ENCODE measurements at regions of chr3 and their contacts with region 1.

Region 1: DNA sequence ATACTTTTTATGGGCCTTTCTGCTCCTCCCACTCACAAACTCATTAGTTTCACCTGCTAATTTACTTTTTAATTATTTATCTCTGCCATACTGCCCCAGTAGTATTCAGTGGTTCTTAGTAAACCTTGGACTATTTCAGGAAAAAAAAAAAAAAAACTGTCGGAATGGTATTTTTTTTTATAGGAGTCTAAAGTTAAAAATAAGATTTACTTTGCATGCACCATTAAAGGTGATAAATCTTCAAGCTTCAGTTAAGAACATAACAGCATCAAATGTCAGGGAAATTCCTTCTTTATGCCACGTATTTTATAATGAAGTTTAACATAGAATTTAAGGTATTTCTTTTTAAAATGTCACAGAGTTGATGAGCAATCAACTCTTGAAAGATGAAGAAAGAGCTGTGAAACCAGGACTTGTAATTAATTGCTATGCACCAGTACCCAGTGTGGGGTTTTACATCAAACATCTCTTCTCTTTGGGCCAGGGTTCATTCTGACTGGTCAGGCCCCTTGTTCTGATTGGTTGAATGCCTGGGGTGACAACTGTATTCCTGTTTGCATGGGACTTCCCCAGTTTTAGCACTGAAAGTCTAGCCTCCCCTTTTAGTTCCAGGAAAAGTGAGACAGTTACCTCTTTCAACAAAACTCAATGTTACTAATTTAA is 40.3 kb upstream of the PTPRG start:
- DNase-seq: peak; percentile 87
- H3K4me3 Mint-ChIP-seq: no peak overlapping the region
- H3K27ac Mint-ChIP-seq: peak overlapping the region; percentile 70
- H3K4me1 Mint-ChIP-seq: peaks cover 31% of the 10 kb centered on the region
- H3K27me3 Mint-ChIP-seq: peaks cover 3% of the 10 kb centered on the region

Region 2: DNA sequence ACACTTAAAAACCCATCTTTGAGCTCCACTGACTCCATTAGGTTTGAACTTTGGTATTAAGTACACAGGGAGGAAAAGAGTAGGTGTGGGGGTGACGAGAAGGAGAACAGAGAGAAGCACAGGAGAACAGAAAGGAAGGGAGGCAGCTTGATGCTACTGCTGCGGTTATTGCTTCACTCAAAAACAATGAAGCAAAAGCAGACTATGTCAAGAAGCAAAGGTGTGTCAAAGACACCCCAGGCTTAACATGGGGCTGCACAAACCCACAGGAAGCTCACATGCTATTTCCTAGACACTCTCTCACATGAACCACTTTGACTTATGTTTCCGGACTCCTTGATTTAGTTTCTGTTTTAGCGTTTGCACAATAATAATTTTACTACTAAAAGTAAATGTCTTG is 1510.3 kb before region 1 on chr3:
- CTCF ChIA-PET with region 1: interaction called, 7 read pairs
- intact Hi-C with region 1: loop called (anchors 10 kb)
- DNase-seq: peak; percentile 80
- H3K4me3 Mint-ChIP-seq: peak overlapping the region; percentile 75
- H3K27ac Mint-ChIP-seq: peak overlapping the region; percentile 97
- H3K4me1 Mint-ChIP-seq: peaks cover 87% of the 10 kb centered on the region
- H3K27me3 Mint-ChIP-seq: no peaks in the 10 kb centered on the region

Region 3: GRCh38 chr3:60086811-60087210 is 1434.3 kb before region 1 on chr3:
- CTCF ChIA-PET with region 1: no interaction called
- intact Hi-C with region 1: loop called (anchors 5 kb)
- DNase-seq: peak; percentile 78
- H3K4me3 Mint-ChIP-seq: no peak overlapping the region
- H3K27ac Mint-ChIP-seq: peak overlapping the region; percentile 78
- H3K4me1 Mint-ChIP-seq: peaks cover 66% of the 10 kb centered on the region
- H3K27me3 Mint-ChIP-seq: no peaks in the 10 kb centered on the region

Region 4: DNA sequence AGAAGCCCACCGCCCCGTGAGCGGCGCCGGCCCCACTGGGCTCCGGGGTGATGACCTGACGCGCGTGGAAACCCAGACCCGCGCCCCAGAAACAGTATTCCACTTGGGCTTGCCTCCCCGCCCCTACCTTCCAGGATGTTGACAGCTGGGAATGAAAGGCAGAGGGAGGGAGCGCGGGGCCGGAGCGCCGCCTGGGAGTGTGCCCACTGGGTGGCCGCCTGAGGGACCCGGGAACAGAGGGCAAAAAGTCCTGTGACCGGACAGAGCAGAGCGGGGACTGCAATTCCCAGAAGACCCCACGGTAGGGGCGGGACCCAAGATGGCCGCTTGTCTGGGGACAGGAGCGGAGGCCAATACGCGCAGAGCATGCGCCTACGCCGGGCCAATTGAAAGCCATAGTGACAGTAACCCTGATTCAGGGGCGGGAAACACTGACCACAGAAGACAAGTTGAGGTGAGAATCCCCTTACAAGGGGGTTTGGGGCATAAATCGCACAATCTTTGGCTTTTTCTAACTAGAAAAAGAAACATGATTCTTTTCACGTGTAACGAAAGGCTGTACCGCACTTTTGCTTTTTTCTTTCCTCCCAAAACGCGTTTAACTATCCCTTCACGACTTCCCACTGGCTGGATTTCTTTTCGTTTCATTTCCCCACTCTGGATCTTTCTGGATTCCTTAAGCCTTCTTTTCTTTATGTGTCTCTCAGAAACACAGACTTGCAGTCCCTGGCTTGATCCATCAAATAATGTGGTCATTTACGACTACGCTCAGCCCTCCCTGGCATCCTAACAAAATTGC is 269.7 kb before region 1 on chr3 and contains the start of gene FHIT:
- CTCF ChIA-PET with region 1: no interaction called
- intact Hi-C with region 1: loop called (anchors 1 kb)
- DNase-seq: peak; percentile 96
- H3K4me3 Mint-ChIP-seq: peak within 1 kb of the TSS; percentile 91
- H3K27ac Mint-ChIP-seq: peak within 1 kb of the TSS; percentile 87
- H3K4me1 Mint-ChIP-seq: peaks cover 11% of the 10 kb centered on the region
- H3K27me3 Mint-ChIP-seq: peaks cover under 1% of the 10 kb centered on the region
- total RNA-seq, gene FHIT: 20.2 to 22.7 TPM

Region 5: DNA sequence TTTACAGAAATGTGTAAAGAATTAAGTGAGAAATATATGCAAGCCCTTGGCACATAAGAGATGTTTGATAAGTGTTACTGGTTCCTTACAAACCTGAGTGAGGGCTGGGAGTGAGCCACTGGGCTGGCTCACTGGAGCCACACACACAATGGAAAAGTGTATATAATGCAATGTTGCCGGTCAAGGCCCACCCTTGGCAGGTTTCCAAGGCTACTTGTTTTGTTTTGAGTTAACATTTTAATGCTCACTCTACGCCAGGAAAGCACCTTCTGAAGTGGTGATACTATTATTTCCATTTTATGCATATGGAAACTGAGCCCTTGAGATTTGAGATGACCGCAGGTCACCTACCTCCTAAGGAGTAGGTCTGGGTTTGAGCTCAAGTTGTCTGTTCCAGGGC is 198.0 kb before region 1 on chr3:
- CTCF ChIA-PET with region 1: no interaction called
- intact Hi-C with region 1: no loop called
- DNase-seq: no peak
- H3K4me3 Mint-ChIP-seq: no peak overlapping the region
- H3K27ac Mint-ChIP-seq: no peak overlapping the region
- H3K4me1 Mint-ChIP-seq: no peaks in the 10 kb centered on the region
- H3K27me3 Mint-ChIP-seq: peaks cover 9% of the 10 kb centered on the region

Region 6: GRCh38 chr3:61420136-61420759 is 100.8 kb before region 1 on chr3:
- CTCF ChIA-PET with region 1: no interaction called
- intact Hi-C with region 1: loop called (anchors 1 kb)
- DNase-seq: no peak
- H3K4me3 Mint-ChIP-seq: no peak overlapping the region
- H3K27ac Mint-ChIP-seq: no peak overlapping the region
- H3K4me1 Mint-ChIP-seq: peaks cover 7% of the 10 kb centered on the region
- H3K27me3 Mint-ChIP-seq: no peaks in the 10 kb centered on the region

Region 7: DNA sequence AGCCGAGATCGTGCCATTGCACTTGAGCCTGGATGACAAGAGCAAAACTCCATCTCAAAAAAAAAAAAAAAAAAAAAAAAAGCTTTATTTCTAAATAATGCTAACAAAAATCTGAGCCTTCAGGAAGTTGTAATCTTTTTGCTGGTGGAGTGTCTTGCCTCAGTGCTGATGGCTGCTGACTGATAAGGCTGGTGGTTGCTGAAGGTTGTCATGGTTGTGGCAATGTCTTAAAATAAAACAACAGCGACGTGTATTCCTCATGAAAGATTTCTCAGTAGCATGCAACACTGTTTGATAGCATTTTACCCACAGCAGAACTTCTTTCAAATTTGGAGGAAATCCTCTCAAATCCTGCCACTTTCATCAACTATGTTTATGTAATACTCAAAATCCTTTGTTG is 37.1 kb before region 1 on chr3:
- CTCF ChIA-PET with region 1: no interaction called
- intact Hi-C with region 1: no loop called
- DNase-seq: no peak
- H3K4me3 Mint-ChIP-seq: no peak overlapping the region
- H3K27ac Mint-ChIP-seq: no peak overlapping the region
- H3K4me1 Mint-ChIP-seq: peaks cover 8% of the 10 kb centered on the region
- H3K27me3 Mint-ChIP-seq: no peaks in the 10 kb centered on the region

Region 8: GRCh38 chr3:61561374-61562041 is 40.4 kb after region 1 on chr3 and contains the start of gene PTPRG:
- CTCF ChIA-PET with region 1: interaction called, 3 read pairs
- intact Hi-C with region 1: loop called (anchors 1 kb)
- DNase-seq: peak; percentile 49
- H3K4me3 Mint-ChIP-seq: peak within 1 kb of the TSS; percentile 79
- H3K27ac Mint-ChIP-seq: no peak within 1 kb of the TSS
- H3K4me1 Mint-ChIP-seq: peaks cover 21% of the 10 kb centered on the region
- H3K27me3 Mint-ChIP-seq: peaks cover 60% of the 10 kb centered on the region
- total RNA-seq, gene PTPRG: 0.24 to 0.37 TPM

Region 9: DNA sequence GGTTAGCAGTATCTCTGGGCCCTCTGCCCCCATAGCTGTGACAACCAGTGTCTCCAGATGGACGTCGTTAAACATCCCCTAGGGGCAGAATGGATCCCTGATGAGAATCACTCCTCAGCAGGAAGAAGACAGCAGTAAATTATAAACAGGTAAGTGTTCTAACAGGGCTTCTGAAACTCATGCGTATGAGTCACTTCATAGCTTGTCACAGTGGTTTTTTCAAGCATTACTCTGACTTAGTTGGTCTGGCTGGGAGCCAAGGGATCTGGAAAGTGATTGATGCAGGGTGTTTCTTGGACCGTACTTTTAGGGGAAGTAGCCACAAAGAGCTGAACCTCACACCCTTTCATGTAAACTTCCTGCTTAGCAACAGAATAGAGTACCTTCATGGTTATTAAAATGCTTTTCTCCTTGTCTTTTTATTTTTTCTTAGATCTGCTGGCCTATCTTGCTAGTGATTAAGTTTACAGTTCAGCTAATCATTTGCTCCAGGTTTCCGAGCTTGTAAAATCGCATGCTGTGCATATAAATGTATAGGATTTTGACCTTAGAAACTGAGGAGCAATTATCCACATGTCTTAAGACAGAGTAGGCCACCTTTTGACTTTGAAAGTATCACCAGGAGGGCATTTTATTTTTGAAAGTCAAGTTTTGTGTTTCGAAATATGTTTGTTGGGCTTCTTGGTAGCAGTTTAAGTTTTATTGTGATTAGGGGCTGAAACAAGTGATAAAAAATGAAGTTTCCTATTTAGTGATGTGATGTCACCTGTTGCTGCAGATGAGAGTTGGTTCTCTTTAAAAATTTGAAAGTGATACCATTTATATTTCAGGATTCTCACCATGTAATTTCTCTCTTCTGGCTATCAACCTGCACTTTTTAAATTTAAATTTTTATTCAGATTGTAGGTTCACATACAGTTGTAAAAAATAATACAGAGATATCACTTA is 374.2 kb after region 1 on chr3:
- CTCF ChIA-PET with region 1: no interaction called
- intact Hi-C with region 1: loop called (anchors 1 kb)
- DNase-seq: peak; percentile 85
- H3K4me3 Mint-ChIP-seq: no peak overlapping the region
- H3K27ac Mint-ChIP-seq: no peak overlapping the region
- H3K4me1 Mint-ChIP-seq: peaks cover 10% of the 10 kb centered on the region
- H3K27me3 Mint-ChIP-seq: peaks cover 1% of the 10 kb centered on the region

Region 10: GRCh38 chr3:61985020-61985419 is 463.9 kb after region 1 on chr3:
- CTCF ChIA-PET with region 1: no interaction called
- intact Hi-C with region 1: no loop called
- DNase-seq: no peak
- H3K4me3 Mint-ChIP-seq: no peak overlapping the region
- H3K27ac Mint-ChIP-seq: no peak overlapping the region
- H3K4me1 Mint-ChIP-seq: no peaks in the 10 kb centered on the region
- H3K27me3 Mint-ChIP-seq: peaks cover 4% of the 10 kb centered on the region

Measured in activated naive CD4-positive, alpha-beta T cell treated with anti-CD3 and anti-CD28 coated beads for 36 hours (primary cell).